ENCODE measurements at regions of chr1 and their contacts with region 1.

Region 1: GRCh38 chr1:28642847-28643635 is at the start of gene TAF12:
- DNase-seq: peak; percentile 90 to 92
- ATAC-seq: peak; percentile 95 to 97 (median 96)
- H3K4me3 ChIP-seq: peak within 1 kb of the TSS; percentile 44 to 98 (median 80)
- H3K27ac ChIP-seq: peak within 1 kb of the TSS; percentile 38 to 95 (median 90)
- H3K4me1 ChIP-seq: peaks cover 8 to 45% (median 37%) of the 10 kb centered on the region in 9 donors
- H3K27me3 ChIP-seq: no peaks in the 10 kb centered on the region
- CTCF ChIP-seq: peak in 7 of 9 donors; percentile 29 to 62 (median 54)
- total RNA-seq, gene TAF12: 17.2 to 27.4 (median 19.4) TPM

Region 2: GRCh38 chr1:28248283-28249012 is 394.6 kb before region 1 on chr1:
- intact Hi-C with region 1: loop called in 1 of 10 experiments (anchors 10 kb)
- DNase-seq: peak; percentile 71 to 82
- ATAC-seq: peak; percentile 13 to 81 (median 58)
- H3K4me3 ChIP-seq: peak overlapping the region in 7 of 10 donors; percentile 2 to 32 (median 14)
- H3K27ac ChIP-seq: peak overlapping the region; percentile 42 to 92 (median 86)
- H3K4me1 ChIP-seq: peaks cover 15 to 69% (median 23%) of the 10 kb centered on the region in 9 donors
- H3K27me3 ChIP-seq: no peaks in the 10 kb centered on the region
- CTCF ChIP-seq: peak; percentile 75 to 96 (median 93)

Region 3: GRCh38 chr1:28736450-28737306 is 93.6 kb after region 1 on chr1 and contains the start of gene YTHDF2:
- intact Hi-C with region 1: loop called in 8 of 10 experiments (anchors 1 to 10 kb)
- DNase-seq: peak; percentile 98 to 99
- ATAC-seq: peak; percentile 99
- H3K4me3 ChIP-seq: peak within 1 kb of the TSS; percentile 66 to 99 (median 95)
- H3K27ac ChIP-seq: peak within 1 kb of the TSS; percentile 42 to 99 (median 96)
- H3K4me1 ChIP-seq: peaks cover 7 to 49% (median 42%) of the 10 kb centered on the region in 9 donors
- H3K27me3 ChIP-seq: no peaks in the 10 kb centered on the region
- CTCF ChIP-seq: peak; percentile 94 to 100 (median 96)
- total RNA-seq, gene YTHDF2: 31.2 to 57.1 (median 44.6) TPM

Region 4: GRCh38 chr1:28877132-28877781 is 234.2 kb after region 1 on chr1:
- intact Hi-C with region 1: loop called in 4 of 10 experiments (anchors 5 to 10 kb)
- DNase-seq: peak; percentile 68 to 73
- ATAC-seq: peak; percentile 70 to 86 (median 84)
- H3K4me3 ChIP-seq: no peak overlapping the region
- H3K27ac ChIP-seq: no peak overlapping the region
- H3K4me1 ChIP-seq: peaks cover 0 to 5% (median 0%) of the 10 kb centered on the region in 9 donors
- H3K27me3 ChIP-seq: peaks cover 0 to 25% (median 7%) of the 10 kb centered on the region in 7 donors
- CTCF ChIP-seq: peak; percentile 87 to 95 (median 93)

Region 5: GRCh38 chr1:29181413-29182225 is 538.6 kb after region 1 on chr1 and contains the start of gene SRSF4:
- intact Hi-C with region 1: loop called in 1 of 10 experiments (anchors 5 kb)
- DNase-seq: peak; percentile 99 to 100
- ATAC-seq: peak; percentile 96 to 97 (median 96)
- H3K4me3 ChIP-seq: peak within 1 kb of the TSS; percentile 83 to 99 (median 91)
- H3K27ac ChIP-seq: peak within 1 kb of the TSS; percentile 99 to 100 (median 100)
- H3K4me1 ChIP-seq: peaks cover 2 to 54% (median 43%) of the 10 kb centered on the region in 9 donors
- H3K27me3 ChIP-seq: no peaks in the 10 kb centered on the region
- CTCF ChIP-seq: peak; percentile 35 to 93 (median 84)
- total RNA-seq, gene SRSF4: 40.8 to 67.8 (median 49.0) TPM